Tibial artery (tissue), 4 donors: ENCODE measurements at regions of chr11 and their contacts with region 1.

Region 1: GRCh38 chr11:39327302-39327701 is 2132.2 kb downstream of the LRRC4C start:
- DNase-seq: no peak
- H3K4me3 ChIP-seq: no peak overlapping the region
- H3K27ac ChIP-seq: no peak overlapping the region
- H3K4me1 ChIP-seq: no peaks in the 10 kb centered on the region
- H3K27me3 ChIP-seq: no peaks in the 10 kb centered on the region
- CTCF ChIP-seq: no peak

Region 2: DNA sequence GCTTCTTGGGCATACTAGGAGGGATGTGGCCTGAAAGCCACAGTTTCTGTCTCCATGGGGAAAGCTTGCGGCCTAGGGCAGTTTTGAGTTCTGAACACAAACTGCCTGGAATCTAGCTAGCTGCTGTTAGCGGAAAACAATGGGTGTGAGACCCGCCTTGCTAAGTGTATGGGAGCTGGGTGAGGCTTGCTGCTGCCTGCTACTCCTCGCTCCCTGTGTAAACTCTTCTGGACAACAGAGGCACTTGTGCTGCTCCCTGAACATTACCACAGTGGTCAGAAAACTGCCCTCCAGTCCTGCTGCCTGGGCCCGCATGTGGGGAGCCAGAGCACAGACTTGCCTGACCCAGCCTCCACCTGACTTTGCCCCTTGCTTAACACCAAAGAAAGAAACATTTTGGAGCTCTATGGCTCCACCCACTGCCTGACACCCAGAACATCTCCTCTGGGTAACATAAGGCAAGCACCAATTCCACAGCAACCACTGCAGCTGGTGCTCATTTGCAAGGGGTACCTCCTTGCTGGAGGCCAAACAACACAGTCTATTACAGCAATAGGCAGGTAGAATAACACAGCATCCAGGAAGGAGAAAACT is 1963.0 kb before region 1 on chr11:
- intact Hi-C with region 1: loop called (anchors 10 kb)
- DNase-seq: no peak
- H3K4me3 ChIP-seq: no peak overlapping the region
- H3K27ac ChIP-seq: no peak overlapping the region
- H3K4me1 ChIP-seq: no peaks in the 10 kb centered on the region
- H3K27me3 ChIP-seq: no peaks in the 10 kb centered on the region
- CTCF ChIP-seq: no peak

Region 3: DNA sequence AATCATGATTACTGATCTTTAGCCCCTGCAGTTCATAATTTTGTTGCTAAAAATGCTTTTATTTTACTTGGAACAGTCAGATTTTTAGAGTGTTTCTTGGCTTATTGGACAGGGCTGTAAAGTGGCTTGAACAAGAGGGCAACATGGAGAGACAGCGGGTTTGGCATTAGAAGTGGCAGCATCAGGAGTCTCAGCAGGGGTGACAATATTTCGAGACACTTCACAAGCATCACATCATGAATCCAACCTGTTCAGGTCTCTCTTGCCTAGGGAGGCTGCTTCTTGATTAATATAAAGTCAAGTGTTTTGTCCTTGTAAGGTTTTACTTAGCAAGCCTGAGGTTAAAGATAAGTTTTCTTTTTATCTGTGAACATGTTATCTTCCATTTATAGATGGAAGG is 117.3 kb before region 1 on chr11:
- intact Hi-C with region 1: no loop called
- DNase-seq: no peak
- H3K4me3 ChIP-seq: no peak overlapping the region
- H3K27ac ChIP-seq: no peak overlapping the region
- H3K4me1 ChIP-seq: no peaks in the 10 kb centered on the region
- H3K27me3 ChIP-seq: no peaks in the 10 kb centered on the region
- CTCF ChIP-seq: no peak

Region 4: DNA sequence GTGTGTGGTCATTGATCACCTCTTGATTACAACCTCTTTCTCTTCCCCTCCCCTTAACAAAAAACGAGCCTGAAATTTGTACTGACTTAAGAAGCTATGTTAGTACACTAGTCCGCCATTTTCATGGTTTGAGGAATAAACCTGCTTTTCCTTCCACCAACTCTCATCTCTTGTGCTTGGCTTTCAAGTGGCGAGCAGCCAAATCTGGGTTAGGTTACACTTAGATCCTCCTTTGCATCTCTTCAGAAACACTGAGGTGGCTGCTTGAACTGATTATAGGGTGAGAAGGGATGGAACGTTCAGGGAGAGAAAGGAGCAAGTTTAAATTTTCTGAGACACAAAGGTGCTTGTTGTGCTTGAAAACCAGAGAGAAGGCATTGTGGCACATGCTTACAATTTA is 39.3 kb before region 1 on chr11:
- intact Hi-C with region 1: no loop called
- DNase-seq: no peak
- H3K4me3 ChIP-seq: no peak overlapping the region
- H3K27ac ChIP-seq: no peak overlapping the region
- H3K4me1 ChIP-seq: no peaks in the 10 kb centered on the region
- H3K27me3 ChIP-seq: no peaks in the 10 kb centered on the region
- CTCF ChIP-seq: no peak

Region 5: DNA sequence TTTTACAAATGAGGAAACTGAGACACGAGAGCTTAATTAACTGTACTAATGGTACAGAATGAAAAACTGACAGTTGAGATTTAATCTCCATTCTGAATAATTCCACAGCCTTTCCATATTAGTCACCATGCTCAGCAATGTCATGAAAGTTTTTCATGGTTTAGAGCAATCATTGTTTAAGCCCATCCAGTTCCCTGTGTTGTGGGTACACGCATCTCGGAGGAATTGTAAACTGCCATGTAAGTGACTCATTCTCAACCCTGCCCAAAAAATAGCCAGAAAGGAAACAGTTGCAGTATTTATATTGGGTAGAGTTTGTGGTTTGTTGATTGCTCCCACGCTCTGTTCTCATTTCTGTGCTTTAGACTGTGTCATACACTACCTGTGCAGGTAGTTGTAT is 341.3 kb after region 1 on chr11:
- intact Hi-C with region 1: no loop called
- DNase-seq: no peak
- H3K4me3 ChIP-seq: no peak overlapping the region
- H3K27ac ChIP-seq: no peak overlapping the region
- H3K4me1 ChIP-seq: no peaks in the 10 kb centered on the region
- H3K27me3 ChIP-seq: no peaks in the 10 kb centered on the region
- CTCF ChIP-seq: no peak